ENCODE measurements at regions of chr19 and their contacts with region 1.

Region 1: GRCh38 chr19:18007044-18007916 is 690 bp upstream of the ARRDC2 start:
- DNase-seq: peak; percentile 91
- H3K4me3 ChIP-seq: peak overlapping the region; percentile 35 to 61 (median 54)
- H3K27ac ChIP-seq: peak overlapping the region; percentile 85 to 92 (median 89)
- H3K4me1 ChIP-seq: peaks cover 0 to 32% (median 16%) of the 10 kb centered on the region in 4 donors
- H3K27me3 ChIP-seq: no peaks in the 10 kb centered on the region
- CTCF ChIP-seq: peak; percentile 95 to 97 (median 96)
- EP300 ChIP-seq: no peak
- POLR2A ChIP-seq: no peak

Region 2: DNA sequence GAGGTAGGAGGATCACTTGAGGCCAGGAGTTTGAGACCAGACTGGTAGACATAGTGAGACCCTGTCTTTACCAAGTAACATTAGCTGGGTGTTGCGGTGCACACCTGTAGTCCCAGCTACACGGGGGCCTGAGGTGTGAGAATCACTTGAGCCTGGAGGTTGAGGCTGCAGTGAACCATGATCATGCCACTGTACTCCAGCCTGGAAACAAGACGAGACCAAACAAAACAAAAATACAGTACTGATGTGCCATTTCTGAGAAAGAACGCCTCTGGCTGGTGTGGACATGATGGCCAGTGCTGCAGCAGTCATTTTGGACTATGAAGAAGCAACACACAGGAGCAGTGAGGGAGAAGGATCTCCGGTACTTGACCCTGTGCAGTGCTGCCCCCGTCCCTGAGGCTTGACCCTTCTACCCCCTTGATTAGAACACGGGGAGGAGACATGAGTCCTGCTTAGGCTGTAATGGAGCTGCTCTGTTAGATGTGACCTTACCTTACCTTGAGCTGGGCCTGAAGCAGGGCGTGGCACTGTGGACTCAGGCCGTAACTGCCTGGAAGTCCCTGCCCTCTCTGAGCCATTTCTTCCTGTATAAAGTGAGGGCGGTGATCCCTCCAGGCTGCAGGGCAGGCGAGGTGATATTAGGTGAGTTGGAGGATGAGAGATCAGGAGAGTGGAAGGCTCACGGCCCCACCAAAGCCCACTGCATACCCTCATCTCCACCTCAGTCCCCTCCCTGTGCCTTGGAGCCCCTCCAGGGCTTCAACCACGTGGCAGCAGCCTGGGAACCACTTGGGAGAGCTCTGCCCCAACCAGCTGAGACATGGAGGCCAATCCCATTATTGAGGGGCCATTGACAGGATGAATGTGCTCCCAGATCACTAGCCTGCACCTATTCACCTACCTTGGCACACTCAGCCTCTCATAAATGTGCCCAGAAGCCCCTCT is 141.6 kb before region 1 on chr19:
- intact Hi-C with region 1: no loop called
- DNase-seq: no peak
- H3K4me3 ChIP-seq: no peak overlapping the region
- H3K27ac ChIP-seq: no peak overlapping the region
- H3K4me1 ChIP-seq: peaks cover 0 to 18% (median 15%) of the 10 kb centered on the region in 4 donors
- H3K27me3 ChIP-seq: peaks cover 0 to 11% (median 8%) of the 10 kb centered on the region in 3 donors
- CTCF ChIP-seq: no peak
- EP300 ChIP-seq: no peak
- POLR2A ChIP-seq: no peak

Region 3: GRCh38 chr19:18058208-18059030 is 51.1 kb after region 1 on chr19:
- intact Hi-C with region 1: loop called (anchors 1 kb)
- DNase-seq: peak; percentile 89
- H3K4me3 ChIP-seq: peak overlapping the region in 3 of 4 donors; percentile 1 to 15 (median 13)
- H3K27ac ChIP-seq: peak overlapping the region; percentile 73 to 90 (median 82)
- H3K4me1 ChIP-seq: peaks cover 0 to 15% (median 13%) of the 10 kb centered on the region in 4 donors
- H3K27me3 ChIP-seq: no peaks in the 10 kb centered on the region
- CTCF ChIP-seq: peak; percentile 96 to 98 (median 97)
- EP300 ChIP-seq: no peak
- POLR2A ChIP-seq: no peak

Region 4: DNA sequence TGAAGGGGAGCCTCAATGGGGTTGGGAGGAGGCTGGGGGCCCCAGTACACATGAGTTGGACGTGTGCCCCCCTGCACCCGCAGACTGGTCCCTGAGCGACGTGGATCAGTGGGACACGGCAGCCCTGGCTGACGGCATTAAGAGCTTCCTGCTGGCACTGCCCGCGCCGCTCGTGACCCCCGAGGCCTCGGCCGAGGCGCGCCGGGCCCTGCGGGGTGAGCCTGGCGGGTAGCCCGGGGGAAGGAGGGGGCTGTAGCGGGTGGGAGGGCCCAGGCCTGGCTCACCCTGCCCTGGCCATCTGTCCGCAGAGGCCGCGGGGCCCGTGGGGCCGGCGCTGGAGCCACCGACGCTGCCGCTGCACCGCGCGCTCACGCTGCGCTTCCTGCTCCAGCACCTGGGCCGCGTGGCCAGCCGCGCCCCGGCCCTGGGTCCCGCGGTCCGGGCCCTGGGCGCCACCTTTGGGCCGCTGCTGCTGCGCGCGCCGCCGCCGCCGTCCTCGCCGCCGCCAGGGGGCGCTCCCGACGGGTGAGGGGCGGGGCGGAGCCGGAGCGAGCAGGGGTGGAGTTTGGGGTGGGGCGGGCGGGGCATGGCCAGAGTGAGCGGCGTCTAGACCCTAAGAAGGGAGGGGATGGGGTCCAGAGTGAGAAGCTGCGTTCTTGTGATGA is 153.8 kb after region 1 on chr19:
- intact Hi-C with region 1: loop called (anchors 5 kb)
- DNase-seq: peak; percentile 83
- H3K4me3 ChIP-seq: peak overlapping the region in 3 of 4 donors; percentile 40 to 52 (median 50)
- H3K27ac ChIP-seq: peak overlapping the region; percentile 71 to 77 (median 74)
- H3K4me1 ChIP-seq: peaks cover 0 to 36% (median 35%) of the 10 kb centered on the region in 4 donors
- H3K27me3 ChIP-seq: no peaks in the 10 kb centered on the region
- CTCF ChIP-seq: peak in 1 of 4 experiments; percentile 61
- EP300 ChIP-seq: no peak
- POLR2A ChIP-seq: no peak

Measured in sigmoid colon (tissue), 7 donors.